Cardiac septum (tissue), 1 donor: ENCODE measurements at regions of chr1 and their contacts with region 1.

Region 1: GRCh38 chr1:200302192-200302920 is 107.5 kb downstream of the ZNF281 start:
- DNase-seq: peak; percentile 79

Region 2: DNA sequence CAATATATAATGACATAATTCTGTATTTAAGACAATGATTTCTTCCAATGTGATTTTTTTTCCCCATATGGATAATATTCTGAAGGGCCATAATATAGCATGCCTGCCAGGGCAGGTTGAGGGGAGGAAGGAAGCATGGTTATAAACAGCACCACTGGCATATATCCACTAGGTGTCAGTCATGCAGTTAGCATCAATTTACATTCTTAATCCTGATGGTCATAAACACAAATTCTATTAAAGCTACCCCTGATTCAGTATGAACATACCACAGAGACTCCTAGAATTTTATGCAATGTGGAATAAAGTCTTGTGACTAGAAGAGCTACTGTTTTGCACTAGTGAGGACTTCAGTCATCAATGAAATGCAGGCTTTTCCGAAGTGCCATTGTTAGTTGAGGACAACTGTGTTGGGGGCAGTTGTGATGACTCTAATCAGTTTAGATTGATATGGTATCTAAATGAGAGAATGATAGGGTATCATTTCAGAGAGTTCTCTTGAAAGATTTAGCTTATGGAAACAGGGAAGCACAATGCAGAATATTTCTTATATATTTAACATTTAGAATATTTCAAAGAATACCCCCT is 617.6 kb before region 1 on chr1:
- intact Hi-C with region 1: loop called (anchors 2 kb)
- DNase-seq: no peak

Region 3: GRCh38 chr1:200139661-200140250 is 162.6 kb before region 1 on chr1:
- intact Hi-C with region 1: loop called (anchors 5 kb)
- DNase-seq: no peak

Region 4: GRCh38 chr1:200409761-200410565 is 107.6 kb after region 1 on chr1 and contains the start of gene ZNF281:
- intact Hi-C with region 1: loop called (anchors 2 kb)
- DNase-seq: peak; percentile 98
- total RNA-seq, gene ZNF281: 8.5 TPM